Endothelial cell of umbilical vein (primary cell): ENCODE measurements at regions of chr5 and their contacts with region 1.

Region 1: DNA sequence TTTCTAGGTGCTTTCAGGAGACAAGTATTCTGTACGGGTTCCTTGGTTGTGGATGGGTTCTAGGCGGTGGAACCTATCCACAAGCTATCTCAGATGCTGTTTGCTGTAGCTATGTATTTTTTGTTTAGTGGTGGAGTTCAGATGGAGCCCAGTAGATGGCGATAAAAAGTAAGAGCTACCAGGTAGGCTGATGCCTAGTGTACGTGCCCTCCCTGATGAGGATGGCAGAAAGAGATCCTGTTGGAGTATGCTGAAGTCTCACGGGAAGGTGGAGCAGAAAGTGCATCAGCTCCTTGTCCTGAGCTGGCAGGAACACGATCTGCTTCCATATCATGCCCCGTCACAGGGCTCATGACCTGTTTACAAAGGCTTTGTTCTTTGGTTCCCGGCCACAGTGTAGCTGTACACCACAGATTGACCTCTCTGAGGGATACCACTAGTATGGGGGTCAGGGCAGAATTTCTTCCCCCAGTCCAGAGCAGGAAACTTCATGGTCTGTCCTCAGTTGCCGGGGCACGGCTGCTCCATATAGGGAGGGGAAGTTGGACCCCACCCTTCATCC is 12.6 kb upstream of the UGT3A2 start:
- DNase-seq: peak; percentile 62
- H3K4me3 ChIP-seq: no peak overlapping the region
- H3K27ac ChIP-seq: no peak overlapping the region
- H3K4me1 ChIP-seq: no peaks in the 10 kb centered on the region
- H3K27me3 ChIP-seq: peaks cover 2 to 8% of the 10 kb centered on the region in 2 experiments
- CTCF ChIP-seq: peak; percentile 48 to 65
- POLR2A ChIP-seq: no peak

Region 2: GRCh38 chr5:35963381-35963843 is 115.9 kb before region 1 on chr5:
- CTCF ChIA-PET with region 1: no interaction called
- POLR2A ChIA-PET with region 1: no interaction called
- dilution Hi-C with region 1: no loop called
- intact Hi-C with region 1: loop called (anchors 2 kb)
- DNase-seq: no peak
- H3K4me3 ChIP-seq: no peak overlapping the region
- H3K27ac ChIP-seq: no peak overlapping the region
- H3K4me1 ChIP-seq: no peaks in the 10 kb centered on the region
- H3K27me3 ChIP-seq: peaks cover 0 to 3% of the 10 kb centered on the region in 2 experiments
- CTCF ChIP-seq: peak; percentile 24 to 64
- POLR2A ChIP-seq: no peak

Region 3: GRCh38 chr5:36089989-36090564 is 10.8 kb after region 1 on chr5:
- CTCF ChIA-PET with region 1: interaction called, 83 read pairs
- POLR2A ChIA-PET with region 1: no interaction called
- dilution Hi-C with region 1: no loop called
- intact Hi-C with region 1: loop called (anchors 1 kb)
- DNase-seq: peak; percentile 49
- H3K4me3 ChIP-seq: no peak overlapping the region
- H3K27ac ChIP-seq: no peak overlapping the region
- H3K4me1 ChIP-seq: no peaks in the 10 kb centered on the region
- H3K27me3 ChIP-seq: peaks cover 2% of the 10 kb centered on the region in 2 experiments
- CTCF ChIP-seq: peak; percentile 27 to 58
- POLR2A ChIP-seq: no peak

Region 4: GRCh38 chr5:36151434-36152323 is 72.4 kb after region 1 on chr5 and contains the starts of genes LMBRD2 and SKP2:
- CTCF ChIA-PET with region 1: interaction called, 30 read pairs
- POLR2A ChIA-PET with region 1: no interaction called
- dilution Hi-C with region 1: no loop called
- intact Hi-C with region 1: loop called (anchors 1 kb)
- DNase-seq: peak; percentile 99
- H3K4me3 ChIP-seq: peak within 1 kb of the TSS; percentile 70 to 84 (median 73)
- H3K27ac ChIP-seq: peak within 1 kb of the TSS; percentile 21
- H3K4me1 ChIP-seq: peaks cover 24% of the 10 kb centered on the region
- H3K27me3 ChIP-seq: no peaks in the 10 kb centered on the region
- CTCF ChIP-seq: no peak
- POLR2A ChIP-seq: peak; percentile 80
- total RNA-seq, gene LMBRD2: 5.2 and 6.6 TPM in 2 replicates
- total RNA-seq, gene SKP2: 40.9 and 42.0 TPM in 2 replicates

Region 5: GRCh38 chr5:36241631-36242533 is 162.6 kb after region 1 on chr5 and contains the start of gene NADK2:
- CTCF ChIA-PET with region 1: interaction called, 10 read pairs
- POLR2A ChIA-PET with region 1: no interaction called
- dilution Hi-C with region 1: no loop called
- intact Hi-C with region 1: loop called (anchors 1 kb)
- DNase-seq: peak; percentile 98
- H3K4me3 ChIP-seq: peak within 1 kb of the TSS; percentile 46 to 59 (median 49)
- H3K27ac ChIP-seq: peak within 1 kb of the TSS; percentile 71
- H3K4me1 ChIP-seq: peaks cover 16% of the 10 kb centered on the region
- H3K27me3 ChIP-seq: no peaks in the 10 kb centered on the region
- CTCF ChIP-seq: peak; percentile 58 to 79
- POLR2A ChIP-seq: peak; percentile 83
- total RNA-seq, gene NADK2: 18.2 and 20.3 TPM in 2 replicates

Region 6: DNA sequence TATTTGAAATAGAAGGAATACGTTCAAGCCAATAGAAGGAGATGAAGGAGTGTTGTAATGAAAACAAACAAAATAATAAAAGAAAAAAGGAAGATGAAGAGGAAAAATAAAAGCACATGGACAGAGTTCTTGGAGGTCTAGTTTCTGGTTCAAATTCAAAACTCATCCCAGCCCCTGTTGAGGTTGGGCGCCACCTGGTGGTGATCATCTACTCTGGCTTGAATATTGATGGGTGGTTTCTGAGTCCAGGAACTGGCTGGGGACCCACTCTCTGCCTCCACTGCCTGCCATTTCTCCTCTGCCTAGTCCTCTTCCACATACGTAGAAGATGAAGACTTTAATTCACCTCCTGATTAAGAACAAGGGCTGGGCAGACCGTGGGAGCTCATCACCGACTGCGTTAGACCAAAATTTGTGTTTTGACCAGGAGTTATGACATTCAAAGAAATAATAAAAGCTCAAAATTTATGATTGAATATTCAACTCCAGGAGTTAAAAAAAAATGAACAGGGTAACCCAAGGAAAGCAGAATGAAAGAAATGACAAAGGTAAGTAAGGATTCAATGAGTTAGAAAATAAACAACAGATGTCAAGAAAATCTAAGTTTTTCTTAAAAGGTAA is 428.2 kb after region 1 on chr5:
- CTCF ChIA-PET with region 1: interaction called, 22 read pairs
- POLR2A ChIA-PET with region 1: no interaction called
- dilution Hi-C with region 1: no loop called
- intact Hi-C with region 1: loop called (anchors 1 kb)
- DNase-seq: peak; percentile 53
- H3K4me3 ChIP-seq: no peak overlapping the region
- H3K27ac ChIP-seq: no peak overlapping the region
- H3K4me1 ChIP-seq: no peaks in the 10 kb centered on the region
- H3K27me3 ChIP-seq: no peaks in the 10 kb centered on the region
- CTCF ChIP-seq: peak; percentile 78 to 84
- POLR2A ChIP-seq: no peak

Region 7: GRCh38 chr5:36695677-36696673 is 616.7 kb after region 1 on chr5:
- CTCF ChIA-PET with region 1: interaction called, 30 read pairs
- POLR2A ChIA-PET with region 1: no interaction called
- dilution Hi-C with region 1: no loop called
- intact Hi-C with region 1: loop called (anchors 1 kb)
- DNase-seq: peak; percentile 51
- H3K4me3 ChIP-seq: no peak overlapping the region
- H3K27ac ChIP-seq: no peak overlapping the region
- H3K4me1 ChIP-seq: no peaks in the 10 kb centered on the region
- H3K27me3 ChIP-seq: peaks cover 3 to 10% of the 10 kb centered on the region in 2 experiments
- CTCF ChIP-seq: peak; percentile 59 to 72
- POLR2A ChIP-seq: no peak

Region 8: GRCh38 chr5:37554938-37555337 is 1475.7 kb after region 1 on chr5:
- CTCF ChIA-PET with region 1: no interaction called
- POLR2A ChIA-PET with region 1: no interaction called
- dilution Hi-C with region 1: no loop called
- intact Hi-C with region 1: no loop called
- DNase-seq: peak; percentile 22
- H3K4me3 ChIP-seq: no peak overlapping the region
- H3K27ac ChIP-seq: no peak overlapping the region
- H3K4me1 ChIP-seq: peaks cover 24% of the 10 kb centered on the region
- H3K27me3 ChIP-seq: no peaks in the 10 kb centered on the region
- CTCF ChIP-seq: peak; percentile 18 to 27
- POLR2A ChIP-seq: no peak